Mammary epithelial cell (primary cell): ENCODE measurements at regions of chr15 and their contacts with region 1.

Region 1: DNA sequence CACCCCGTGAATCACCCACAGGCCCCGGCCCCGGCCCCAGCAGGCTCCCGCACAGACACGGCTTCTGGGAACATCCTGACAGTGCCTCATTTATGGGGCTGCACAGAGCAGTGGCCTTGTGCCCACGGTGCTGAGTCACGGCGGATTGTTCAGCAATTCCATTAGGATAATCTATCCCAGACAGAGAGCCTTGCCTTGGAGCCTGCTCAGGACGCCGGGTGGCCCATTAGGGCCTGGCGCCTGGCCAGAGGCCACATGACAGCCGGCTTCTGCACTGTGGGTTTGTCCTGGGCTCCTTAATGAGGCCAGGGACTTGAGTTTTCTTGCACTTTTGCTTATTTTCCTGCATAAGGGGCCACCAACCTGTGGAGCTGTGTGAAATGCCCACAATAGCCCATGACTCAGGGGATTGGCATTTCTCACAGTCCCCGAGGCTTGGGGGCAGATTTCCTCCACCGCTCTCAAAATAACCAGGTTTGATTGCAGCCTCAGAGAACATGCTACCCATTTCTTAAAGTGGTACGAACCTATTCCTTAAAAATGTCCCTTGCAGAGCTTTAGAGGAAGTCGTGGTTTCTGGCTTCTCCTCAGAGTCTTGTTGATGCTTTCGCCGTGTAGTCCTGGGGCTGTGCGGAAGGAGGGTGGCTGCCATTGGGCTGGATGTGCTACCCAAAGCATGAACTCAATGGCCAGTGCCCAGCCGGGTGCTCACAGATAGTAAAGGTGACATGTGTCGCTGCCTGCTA is 19.0 kb downstream of the SYNM start:
- DNase-seq: peak; percentile 92
- H3K4me3 ChIP-seq: peak overlapping the region; percentile 7 to 28 (median 20)
- H3K27ac ChIP-seq: peak overlapping the region; percentile 22
- H3K4me1 ChIP-seq: peaks cover 28% of the 10 kb centered on the region
- H3K27me3 ChIP-seq: no peaks in the 10 kb centered on the region
- CTCF ChIP-seq: no peak

Region 2: GRCh38 chr15:99104788-99105513 is 18.9 kb before region 1 on chr15 and contains the start of gene SYNM:
- CTCF ChIA-PET with region 1: no interaction called
- dilution Hi-C with region 1: no loop called
- in situ Hi-C with region 1: no loop called
- intact Hi-C with region 1: loop called (anchors 1 kb)
- DNase-seq: peak; percentile 74
- H3K4me3 ChIP-seq: peak within 1 kb of the TSS; percentile 34 to 54 (median 49)
- H3K27ac ChIP-seq: no peak within 1 kb of the TSS
- H3K4me1 ChIP-seq: peaks cover 30% of the 10 kb centered on the region
- H3K27me3 ChIP-seq: peaks cover 1% of the 10 kb centered on the region
- CTCF ChIP-seq: peak; percentile 43 to 60
- total RNA-seq, gene SYNM: 0.82 to 4.3 TPM